ENCODE measurements at regions of chr12 and their contacts with region 1.

Region 1: DNA sequence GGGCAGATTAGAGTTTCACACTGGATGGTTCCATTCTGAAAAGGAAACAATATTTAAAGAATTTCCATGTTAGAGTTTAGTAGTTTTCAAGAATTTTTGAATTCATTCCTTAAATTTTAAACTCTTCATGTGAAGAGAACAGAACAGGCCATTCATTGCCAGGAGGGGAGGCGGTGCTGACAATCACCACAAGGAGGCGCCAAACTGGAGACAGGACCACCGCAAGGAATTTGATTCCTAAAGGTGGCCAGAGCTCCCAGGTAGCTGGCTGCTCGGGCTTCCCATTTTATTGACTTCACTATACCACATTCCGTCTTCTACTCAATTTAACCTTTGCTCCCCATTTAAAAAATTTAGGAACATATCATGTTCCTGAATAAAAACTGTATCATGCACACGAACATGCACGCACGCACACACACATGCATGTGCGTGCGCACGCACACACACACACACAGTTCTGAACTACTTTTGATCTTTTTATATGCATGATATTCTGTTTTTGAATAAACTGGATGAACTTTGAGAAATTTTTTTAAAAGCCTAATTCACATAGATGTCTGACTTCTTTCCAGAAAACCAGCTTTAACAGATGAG is 101.2 kb downstream of the NELL2 start:
- DNase-seq: peak; percentile 37 to 81 (median 67)
- ATAC-seq: peak; percentile 58
- H3K4me3 ChIP-seq: no peak overlapping the region
- H3K4me3 Mint-ChIP-seq: no peak overlapping the region
- H3K27ac ChIP-seq: no peak overlapping the region
- H3K27ac Mint-ChIP-seq: no peak overlapping the region
- H3K4me1 ChIP-seq: no peaks in the 10 kb centered on the region
- H3K4me1 Mint-ChIP-seq: peaks cover 15% of the 10 kb centered on the region
- H3K27me3 ChIP-seq: no peaks in the 10 kb centered on the region
- H3K27me3 Mint-ChIP-seq: no peaks in the 10 kb centered on the region
- CTCF ChIP-seq: peak; percentile 93

Region 2: DNA sequence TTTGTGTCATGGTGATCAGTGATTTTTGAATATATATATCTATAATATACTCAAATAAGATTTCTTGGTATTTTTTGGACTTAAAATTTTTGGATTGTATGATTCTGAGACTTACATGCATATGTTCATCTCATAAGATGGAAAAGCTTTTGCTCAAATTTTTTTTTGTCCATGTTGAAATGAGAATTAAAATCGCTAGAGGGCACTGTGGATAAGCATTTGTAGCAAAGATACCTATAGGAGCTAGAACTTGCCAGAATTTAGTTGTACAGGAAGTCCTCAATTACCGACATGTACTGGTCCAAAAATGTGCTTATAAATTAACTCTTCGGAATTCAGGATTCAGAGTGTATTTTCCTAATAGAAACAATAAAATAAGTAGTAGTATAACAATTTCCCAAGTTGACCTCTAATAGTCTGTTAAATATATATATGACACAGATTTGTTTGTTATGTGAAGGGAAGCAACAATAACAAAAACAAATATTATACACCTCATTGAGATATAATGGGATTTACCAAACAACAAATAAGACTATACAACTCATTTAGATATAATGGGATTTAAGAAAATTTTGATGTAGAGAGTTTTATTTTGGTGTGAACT is 759.5 kb before region 1 on chr12:
- CTCF ChIA-PET with region 1: no interaction called
- POLR2A ChIA-PET with region 1: no interaction called
- intact Hi-C with region 1: loop called (anchors 2 to 10 kb)
- DNase-seq: peak in 2 of 9 experiments; percentile 48 to 65
- ATAC-seq: peak; percentile 52
- H3K4me3 ChIP-seq: no peak overlapping the region
- H3K4me3 Mint-ChIP-seq: no peak overlapping the region
- H3K27ac ChIP-seq: no peak overlapping the region
- H3K27ac Mint-ChIP-seq: no peak overlapping the region
- H3K4me1 ChIP-seq: no peaks in the 10 kb centered on the region
- H3K4me1 Mint-ChIP-seq: peaks cover 2% of the 10 kb centered on the region
- H3K27me3 ChIP-seq: no peaks in the 10 kb centered on the region
- H3K27me3 Mint-ChIP-seq: no peaks in the 10 kb centered on the region
- CTCF ChIP-seq: peak; percentile 71

Region 3: GRCh38 chr12:44647917-44648690 is 126.8 kb before region 1 on chr12:
- CTCF ChIA-PET with region 1: no interaction called
- POLR2A ChIA-PET with region 1: no interaction called
- intact Hi-C with region 1: no loop called
- DNase-seq: no peak
- ATAC-seq: no peak
- H3K4me3 ChIP-seq: no peak overlapping the region
- H3K4me3 Mint-ChIP-seq: no peak overlapping the region
- H3K27ac ChIP-seq: no peak overlapping the region
- H3K27ac Mint-ChIP-seq: peak overlapping the region; percentile 35
- H3K4me1 ChIP-seq: peaks cover 4% of the 10 kb centered on the region
- H3K4me1 Mint-ChIP-seq: peaks cover 33% of the 10 kb centered on the region
- H3K27me3 ChIP-seq: no peaks in the 10 kb centered on the region
- H3K27me3 Mint-ChIP-seq: no peaks in the 10 kb centered on the region
- CTCF ChIP-seq: no peak

Region 4: DNA sequence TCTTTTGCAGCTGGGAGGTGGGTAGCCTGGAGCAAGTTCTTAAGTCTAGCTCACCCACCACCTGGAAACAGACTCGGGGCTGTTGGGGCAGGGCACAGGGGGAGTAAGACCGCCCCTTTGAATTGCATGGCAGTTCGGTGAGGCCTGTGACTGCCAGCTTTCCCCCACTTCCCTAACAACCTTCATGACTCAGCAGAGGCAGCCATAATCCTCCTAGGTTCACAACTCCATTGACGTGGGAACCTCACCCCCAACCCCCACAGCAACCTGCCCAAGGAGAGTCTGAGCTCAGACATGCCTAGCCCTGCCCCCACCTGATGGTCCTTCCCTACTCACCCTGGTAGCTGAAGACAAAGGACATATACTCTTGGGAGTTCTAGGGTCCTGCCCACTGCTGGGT is 13.8 kb after region 1 on chr12:
- CTCF ChIA-PET with region 1: interaction called, 9 read pairs
- POLR2A ChIA-PET with region 1: interaction called, 3 read pairs
- intact Hi-C with region 1: loop called in 1 of 2 experiments (anchors 2 kb)
- DNase-seq: no peak
- ATAC-seq: no peak
- H3K4me3 ChIP-seq: no peak overlapping the region
- H3K4me3 Mint-ChIP-seq: no peak overlapping the region
- H3K27ac ChIP-seq: no peak overlapping the region
- H3K27ac Mint-ChIP-seq: peak overlapping the region; percentile 53
- H3K4me1 ChIP-seq: peaks cover 5% of the 10 kb centered on the region
- H3K4me1 Mint-ChIP-seq: peaks cover 70% of the 10 kb centered on the region
- H3K27me3 ChIP-seq: no peaks in the 10 kb centered on the region
- H3K27me3 Mint-ChIP-seq: no peaks in the 10 kb centered on the region
- CTCF ChIP-seq: no peak

Measured in CD8-positive, alpha-beta T cell (primary cell).